H1 (cell line): ENCODE measurements at regions of chr1 and their contacts with region 1.

Region 1: DNA sequence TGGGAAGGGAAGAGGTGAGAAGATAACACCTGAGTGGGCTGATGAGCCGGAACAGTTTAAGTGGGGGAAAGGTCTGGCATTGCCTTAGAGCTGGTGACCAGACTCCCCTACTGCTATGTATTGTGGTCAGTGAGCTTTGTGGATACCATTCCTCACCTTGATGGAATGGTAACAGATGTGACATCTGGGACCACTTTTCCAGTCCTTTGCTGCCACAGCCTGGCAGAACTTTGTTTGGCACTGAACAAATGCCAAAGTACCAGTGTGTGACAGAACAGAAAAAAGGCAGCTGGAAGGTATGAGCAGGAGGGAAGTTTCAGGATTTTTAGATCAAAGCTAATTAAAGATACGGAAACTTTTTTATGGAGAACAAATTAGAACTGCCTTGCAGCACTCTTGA is 6.2 kb downstream of the MED8 start:
- DNase-seq: no peak
- H3K4me3 ChIP-seq: no peak overlapping the region
- H3K27ac ChIP-seq: no peak overlapping the region
- H3K4me1 ChIP-seq: peaks cover 0 to under 1% (median 0%) of the 10 kb centered on the region in 4 experiments; a peak in 1 of 7 replicates
- H3K27me3 ChIP-seq: no peaks in the 10 kb centered on the region
- CTCF ChIP-seq: no peak
- EP300 ChIP-seq: no peak
- POLR2A ChIP-seq: no peak
- RAD21 ChIP-seq: peak; percentile 27 to 41; a peak in 3 of 4 replicates

Region 2: DNA sequence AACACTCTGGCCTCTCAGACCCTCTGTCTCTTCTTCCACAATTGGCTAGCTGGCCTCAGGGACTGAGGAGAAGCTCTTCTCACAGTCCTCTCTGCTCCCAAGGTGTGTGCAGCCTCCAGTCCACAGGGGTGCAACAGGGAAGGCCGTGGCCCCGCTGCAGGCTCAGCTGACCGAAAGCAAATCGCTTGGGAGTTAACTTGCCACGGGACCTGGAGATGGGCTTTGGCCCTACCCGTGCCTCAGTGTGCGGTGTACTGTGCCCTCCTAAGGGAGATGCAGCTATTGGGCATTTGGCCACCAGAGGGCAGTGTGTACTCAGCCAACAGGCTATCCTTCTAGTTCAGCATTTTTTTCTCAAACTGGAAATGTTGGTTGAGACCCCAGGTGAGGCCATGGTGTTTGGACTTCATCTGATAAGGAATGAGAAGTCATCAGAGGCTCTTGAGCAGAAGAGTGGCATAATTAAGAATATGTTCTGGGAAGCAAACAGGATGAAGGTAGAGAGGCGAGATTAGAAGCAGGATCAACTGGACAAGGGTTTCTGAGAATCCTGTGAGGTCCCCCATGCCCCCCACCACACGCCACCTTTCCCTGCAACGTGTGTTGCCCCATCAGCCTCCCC is 156.2 kb before region 1 on chr1:
- CTCF ChIA-PET with region 1: interaction called, 15 read pairs
- POLR2A ChIA-PET with region 1: interaction called, 4 read pairs
- DNase-seq: peak; percentile 80 to 98
- H3K4me3 ChIP-seq: no peak overlapping the region
- H3K27ac ChIP-seq: no peak overlapping the region
- H3K4me1 ChIP-seq: peaks cover 0 to 5% (median 3%) of the 10 kb centered on the region in 4 experiments; a peak in 3 of 7 replicates
- H3K27me3 ChIP-seq: no peaks in the 10 kb centered on the region
- CTCF ChIP-seq: peak; percentile 89 to 99 (median 93)
- EP300 ChIP-seq: no peak
- POLR2A ChIP-seq: no peak
- RAD21 ChIP-seq: peak; percentile 99 to 100

Region 3: DNA sequence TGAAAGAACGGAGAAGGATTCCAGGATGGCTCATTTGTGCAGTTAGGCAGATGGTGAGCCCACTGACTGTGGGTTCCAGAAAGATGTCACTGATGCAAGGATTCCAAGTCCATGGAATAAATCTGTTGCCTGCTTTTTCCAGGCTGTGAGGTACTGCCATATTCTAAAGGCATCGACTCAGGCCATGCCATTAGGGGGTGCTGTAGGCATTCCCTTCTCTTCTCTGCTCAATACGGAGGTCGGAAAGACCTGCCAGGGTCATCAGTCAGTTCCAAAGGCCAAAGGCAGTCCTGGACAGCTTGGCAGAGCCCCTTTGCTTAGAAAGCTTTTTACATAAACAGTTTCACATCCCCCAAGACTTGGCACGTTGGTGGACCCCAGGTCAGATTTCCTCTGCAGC is 145.4 kb before region 1 on chr1:
- CTCF ChIA-PET with region 1: interaction called, 12 read pairs
- POLR2A ChIA-PET with region 1: interaction called, 4 read pairs
- DNase-seq: peak; percentile 36 to 79
- H3K4me3 ChIP-seq: no peak overlapping the region
- H3K27ac ChIP-seq: no peak overlapping the region
- H3K4me1 ChIP-seq: no peaks in the 10 kb centered on the region
- H3K27me3 ChIP-seq: no peaks in the 10 kb centered on the region
- CTCF ChIP-seq: peak; percentile 57 to 97 (median 90)
- EP300 ChIP-seq: no peak
- POLR2A ChIP-seq: no peak
- RAD21 ChIP-seq: peak; percentile 98

Region 4: DNA sequence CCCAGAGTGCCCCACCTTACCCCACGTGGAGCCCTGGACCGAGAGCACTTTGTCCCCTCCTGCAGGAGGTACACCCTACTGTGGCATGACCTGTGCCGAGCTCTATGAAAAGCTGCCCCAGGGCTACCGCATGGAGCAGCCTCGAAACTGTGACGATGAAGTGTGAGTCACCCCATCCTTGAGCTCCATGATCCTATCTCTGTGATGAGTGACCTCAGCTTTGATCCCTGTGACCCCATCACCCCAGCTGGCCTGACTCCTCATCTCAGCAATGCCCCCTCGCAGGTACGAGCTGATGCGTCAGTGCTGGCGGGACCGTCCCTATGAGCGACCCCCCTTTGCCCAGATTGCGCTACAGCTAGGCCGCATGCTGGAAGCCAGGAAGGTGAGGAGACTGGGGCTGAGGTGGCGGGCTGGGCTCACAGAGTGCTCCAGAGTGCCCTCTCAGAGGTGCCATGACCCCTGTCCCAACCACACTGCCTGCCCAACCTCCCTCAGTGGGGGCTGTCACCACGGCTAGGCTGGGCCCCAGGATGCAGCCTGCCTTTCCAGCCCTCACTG is 62.0 kb before region 1 on chr1:
- CTCF ChIA-PET with region 1: no interaction called
- POLR2A ChIA-PET with region 1: no interaction called
- DNase-seq: no peak
- H3K4me3 ChIP-seq: no peak overlapping the region
- H3K27ac ChIP-seq: no peak overlapping the region
- H3K4me1 ChIP-seq: peaks cover 0 to 5% (median 2%) of the 10 kb centered on the region in 4 experiments; a peak in 3 of 7 replicates
- H3K27me3 ChIP-seq: no peaks in the 10 kb centered on the region; a peak in 1 of 7 replicates
- CTCF ChIP-seq: no peak
- EP300 ChIP-seq: no peak
- POLR2A ChIP-seq: no peak
- RAD21 ChIP-seq: no peak